ENCODE measurements at regions of chr19 and their contacts with region 1.

Region 1: GRCh38 chr19:31054430-31054829 is 294.8 kb downstream of the TSHZ3 start:
- DNase-seq: peak; percentile 79
- ATAC-seq: peak; percentile 100
- H3K4me3 Mint-ChIP-seq: no peak overlapping the region
- H3K27ac Mint-ChIP-seq: no peak overlapping the region
- H3K4me1 Mint-ChIP-seq: peaks cover 15% of the 10 kb centered on the region
- H3K27me3 Mint-ChIP-seq: no peaks in the 10 kb centered on the region
- CTCF ChIP-seq: peak; percentile 50

Region 2: GRCh38 chr19:30682999-30683536 is 371.4 kb before region 1 on chr19:
- CTCF ChIA-PET with region 1: interaction called, 15 read pairs
- POLR2A ChIA-PET with region 1: no interaction called
- DNase-seq: peak; percentile 78
- ATAC-seq: peak; percentile 58
- H3K4me3 Mint-ChIP-seq: no peak overlapping the region
- H3K27ac Mint-ChIP-seq: no peak overlapping the region
- H3K4me1 Mint-ChIP-seq: peaks cover 35% of the 10 kb centered on the region
- H3K27me3 Mint-ChIP-seq: no peaks in the 10 kb centered on the region
- CTCF ChIP-seq: peak; percentile 80

Region 3: GRCh38 chr19:30941591-30941990 is 112.8 kb before region 1 on chr19:
- CTCF ChIA-PET with region 1: no interaction called
- POLR2A ChIA-PET with region 1: no interaction called
- DNase-seq: no peak
- ATAC-seq: no peak
- H3K4me3 Mint-ChIP-seq: no peak overlapping the region
- H3K27ac Mint-ChIP-seq: no peak overlapping the region
- H3K4me1 Mint-ChIP-seq: peaks cover 7% of the 10 kb centered on the region; the same call in 1 of the 2 replicates
- H3K27me3 Mint-ChIP-seq: no peaks in the 10 kb centered on the region
- CTCF ChIP-seq: no peak

Region 4: DNA sequence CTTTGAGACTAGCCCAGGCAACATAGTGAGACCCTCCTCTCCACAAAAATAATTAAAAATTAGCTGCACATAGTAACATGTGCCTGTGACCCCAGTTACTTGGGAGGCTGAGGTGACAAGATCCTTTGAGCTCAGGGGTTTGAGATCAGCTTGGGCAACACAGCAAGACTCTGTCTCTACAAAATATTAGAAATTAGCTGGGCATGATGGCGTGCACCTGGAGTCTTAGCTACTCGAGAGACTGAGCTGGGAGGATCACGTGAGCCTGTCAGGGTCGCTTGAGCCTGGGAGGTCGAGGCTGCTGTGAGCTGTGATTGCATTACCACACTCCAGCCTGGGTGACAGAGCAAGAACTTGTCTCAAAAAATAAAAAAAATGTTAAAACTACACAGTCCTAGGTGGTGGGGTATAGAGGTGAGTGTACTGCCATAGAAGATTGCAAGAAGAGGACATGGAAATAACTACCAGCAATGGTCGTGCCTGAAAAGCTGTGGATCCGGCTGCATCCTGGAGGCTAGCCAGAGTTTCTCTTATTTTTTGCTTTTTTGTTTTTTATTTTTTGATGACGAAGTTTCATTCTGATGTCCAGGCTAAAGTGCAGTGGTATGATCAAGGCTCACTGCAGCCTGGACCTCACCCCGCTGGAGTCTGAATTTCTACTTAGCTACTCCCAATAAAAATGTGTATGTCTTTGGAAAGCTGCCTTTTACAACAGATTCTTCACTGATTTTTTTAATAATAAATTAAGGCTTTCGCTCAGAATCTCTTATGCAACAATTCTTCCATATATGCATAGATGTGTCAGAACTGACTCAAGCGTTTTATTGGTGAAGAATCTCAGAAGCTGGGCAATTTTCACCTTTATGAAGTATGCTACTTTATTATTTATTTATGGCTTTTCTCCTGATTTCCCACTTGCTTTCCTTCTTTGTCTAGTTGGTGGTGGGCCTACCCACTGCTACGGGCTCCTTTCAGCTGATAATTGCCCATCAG is 99.0 kb before region 1 on chr19:
- CTCF ChIA-PET with region 1: interaction called, 11 read pairs
- POLR2A ChIA-PET with region 1: no interaction called
- DNase-seq: no peak
- ATAC-seq: no peak
- H3K4me3 Mint-ChIP-seq: no peak overlapping the region
- H3K27ac Mint-ChIP-seq: no peak overlapping the region
- H3K4me1 Mint-ChIP-seq: peaks cover 32% of the 10 kb centered on the region
- H3K27me3 Mint-ChIP-seq: no peaks in the 10 kb centered on the region
- CTCF ChIP-seq: no peak

Region 5: DNA sequence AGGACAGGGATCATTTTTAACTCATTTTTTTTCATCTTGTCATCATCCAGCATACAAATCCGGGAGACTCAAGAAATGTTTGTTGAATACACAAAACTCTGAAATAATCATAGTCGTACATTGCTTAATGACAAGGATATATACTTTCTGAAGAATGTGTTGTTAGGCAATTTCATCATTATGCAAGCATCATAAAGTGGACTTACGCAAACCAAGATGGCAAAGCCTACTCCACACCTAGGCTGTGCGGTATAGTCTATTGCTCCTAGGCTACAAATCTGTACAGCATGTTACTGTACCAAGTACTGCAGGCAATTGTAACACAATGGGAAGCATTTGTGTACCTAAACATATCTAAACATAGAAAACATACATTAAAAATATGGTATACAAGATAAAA is 30.7 kb after region 1 on chr19:
- CTCF ChIA-PET with region 1: no interaction called
- POLR2A ChIA-PET with region 1: no interaction called
- DNase-seq: no peak
- ATAC-seq: no peak
- H3K4me3 Mint-ChIP-seq: no peak overlapping the region
- H3K27ac Mint-ChIP-seq: no peak overlapping the region
- H3K4me1 Mint-ChIP-seq: no peaks in the 10 kb centered on the region
- H3K27me3 Mint-ChIP-seq: no peaks in the 10 kb centered on the region
- CTCF ChIP-seq: no peak

Region 6: DNA sequence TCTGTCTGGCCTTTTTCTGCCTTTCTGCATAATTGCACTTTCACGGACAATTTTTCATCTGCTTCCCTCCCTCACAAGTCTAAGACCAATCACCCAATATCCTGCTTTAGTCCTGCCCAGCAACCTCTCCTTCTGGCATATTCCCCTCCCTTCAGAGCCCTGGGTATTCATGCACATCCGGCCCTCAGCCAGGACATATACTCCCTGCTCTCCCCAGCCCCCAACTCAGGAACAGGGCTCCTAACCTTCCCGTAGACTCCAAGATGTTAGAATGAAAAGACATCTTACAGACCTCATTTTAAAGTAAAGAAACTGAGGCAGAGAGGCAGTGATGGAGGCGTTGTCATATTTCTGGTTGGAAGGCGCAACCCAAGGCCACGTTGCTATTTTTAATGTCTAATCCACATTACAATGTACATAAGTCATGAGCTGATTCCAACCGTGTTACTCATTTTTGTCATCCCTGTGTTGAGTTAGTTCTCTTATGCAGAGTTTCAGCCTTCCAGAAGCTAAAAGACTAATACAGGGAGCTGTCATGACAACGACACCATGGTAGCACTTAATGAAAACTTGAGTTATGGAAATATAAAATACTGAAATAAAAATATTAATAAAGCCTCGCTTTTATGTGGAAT is 85.6 kb after region 1 on chr19:
- CTCF ChIA-PET with region 1: interaction called, 14 read pairs
- POLR2A ChIA-PET with region 1: no interaction called
- DNase-seq: no peak
- ATAC-seq: no peak
- H3K4me3 Mint-ChIP-seq: no peak overlapping the region
- H3K27ac Mint-ChIP-seq: no peak overlapping the region
- H3K4me1 Mint-ChIP-seq: peaks cover 8% of the 10 kb centered on the region
- H3K27me3 Mint-ChIP-seq: no peaks in the 10 kb centered on the region
- CTCF ChIP-seq: no peak

Region 7: DNA sequence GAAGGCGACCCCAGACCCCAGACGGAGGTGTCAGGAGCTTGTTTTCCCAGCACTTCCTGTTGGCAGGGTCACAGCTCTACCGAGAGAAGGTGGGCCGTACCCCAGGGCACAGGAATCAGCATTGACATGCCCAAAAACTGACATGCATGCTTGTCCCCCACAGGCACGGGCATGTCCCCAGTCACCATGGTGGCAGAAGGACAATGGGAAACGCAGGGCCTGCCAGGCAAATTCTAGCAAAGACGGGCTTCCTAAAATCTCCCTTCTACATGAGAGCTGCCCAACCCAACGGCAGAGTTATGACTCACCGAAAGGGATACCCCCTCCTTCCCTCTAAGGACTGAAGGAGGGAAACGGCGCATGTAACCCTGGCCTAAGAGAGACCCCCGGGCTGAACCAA is 276.3 kb after region 1 on chr19:
- CTCF ChIA-PET with region 1: interaction called, 14 read pairs
- POLR2A ChIA-PET with region 1: no interaction called
- DNase-seq: no peak
- ATAC-seq: no peak
- H3K4me3 Mint-ChIP-seq: no peak overlapping the region
- H3K27ac Mint-ChIP-seq: peak overlapping the region; percentile 64; the same call in 1 of the 2 replicates
- H3K4me1 Mint-ChIP-seq: peaks cover 85% of the 10 kb centered on the region
- H3K27me3 Mint-ChIP-seq: no peaks in the 10 kb centered on the region
- CTCF ChIP-seq: no peak

Region 8: GRCh38 chr19:31418035-31418434 is 363.6 kb after region 1 on chr19:
- CTCF ChIA-PET with region 1: interaction called, 12 read pairs
- POLR2A ChIA-PET with region 1: no interaction called
- DNase-seq: peak; percentile 52
- ATAC-seq: peak; percentile 23
- H3K4me3 Mint-ChIP-seq: peak overlapping the region; percentile 34
- H3K27ac Mint-ChIP-seq: peak overlapping the region; percentile 100
- H3K4me1 Mint-ChIP-seq: peaks cover 81% of the 10 kb centered on the region
- H3K27me3 Mint-ChIP-seq: no peaks in the 10 kb centered on the region
- CTCF ChIP-seq: no peak